SK-MEL-5 (cell line): ENCODE measurements at regions of chr4 and their contacts with region 1.

Region 1: GRCh38 chr4:123966990-123967769 is 570.6 kb downstream of the SPRY1 start:
- DNase-seq: no peak

Region 2: GRCh38 chr4:123621072-123621705 is 346.0 kb before region 1 on chr4:
- in situ Hi-C with region 1: no loop called
- DNase-seq: no peak

Region 3: DNA sequence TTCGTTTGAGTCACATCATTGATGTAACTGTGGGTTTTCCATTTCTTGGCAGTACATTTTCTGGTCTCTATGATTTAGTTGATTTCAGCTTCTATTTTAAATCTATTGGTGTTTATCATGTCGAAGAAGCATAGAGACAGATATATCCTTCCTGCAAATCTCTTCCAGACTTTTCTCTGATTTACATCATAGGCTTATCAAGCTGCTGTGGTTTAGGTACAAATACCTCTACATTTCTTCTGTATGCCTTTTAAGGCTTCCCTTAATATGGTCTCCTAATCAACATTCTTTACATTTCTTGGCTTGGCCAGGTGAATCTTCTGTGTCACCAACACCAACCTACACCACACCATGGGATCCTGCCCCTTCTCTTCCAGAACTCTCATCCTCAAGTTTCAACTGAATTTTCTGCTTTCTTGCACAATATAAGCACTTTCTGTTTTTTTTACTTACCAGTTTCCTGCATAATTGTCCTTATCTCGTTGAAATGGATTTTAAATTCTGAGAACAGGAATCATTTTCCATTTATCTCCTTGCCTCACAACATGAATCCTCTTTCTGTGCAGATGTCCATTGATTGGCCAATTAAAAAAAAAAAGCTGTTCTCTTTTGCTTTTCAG is 118.5 kb after region 1 on chr4:
- in situ Hi-C with region 1: loop called (anchors 10 kb)
- DNase-seq: no peak